Gastrocnemius medialis (tissue), 4 donors: ENCODE measurements at regions of chr4 and their contacts with region 1.

Region 1: DNA sequence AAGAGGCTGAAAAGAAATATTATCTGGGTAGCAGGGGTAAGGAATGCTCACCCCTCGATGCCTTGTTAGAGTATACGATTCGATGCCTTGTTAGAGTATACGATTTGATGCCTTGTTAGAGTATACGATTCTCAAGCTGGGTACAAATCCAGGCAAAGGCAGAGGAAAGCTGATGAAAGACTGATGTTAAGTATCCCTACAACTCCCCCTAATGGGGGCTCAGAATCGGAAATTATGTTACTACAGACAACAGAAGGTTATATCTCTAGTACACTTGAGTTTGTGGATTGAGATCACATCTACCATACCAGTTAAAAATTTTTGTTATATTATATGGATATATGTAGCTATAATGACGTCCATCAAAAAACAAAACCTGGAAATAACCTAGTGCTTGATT is 4.8 kb downstream of the LRRC66 start:
- DNase-seq: no peak
- ATAC-seq: no peak
- H3K4me3 ChIP-seq: no peak overlapping the region
- H3K27ac ChIP-seq: no peak overlapping the region
- H3K4me1 ChIP-seq: no peaks in the 10 kb centered on the region
- H3K27me3 ChIP-seq: no peaks in the 10 kb centered on the region
- CTCF ChIP-seq: no peak
- POLR2A ChIP-seq: no peak

Region 2: DNA sequence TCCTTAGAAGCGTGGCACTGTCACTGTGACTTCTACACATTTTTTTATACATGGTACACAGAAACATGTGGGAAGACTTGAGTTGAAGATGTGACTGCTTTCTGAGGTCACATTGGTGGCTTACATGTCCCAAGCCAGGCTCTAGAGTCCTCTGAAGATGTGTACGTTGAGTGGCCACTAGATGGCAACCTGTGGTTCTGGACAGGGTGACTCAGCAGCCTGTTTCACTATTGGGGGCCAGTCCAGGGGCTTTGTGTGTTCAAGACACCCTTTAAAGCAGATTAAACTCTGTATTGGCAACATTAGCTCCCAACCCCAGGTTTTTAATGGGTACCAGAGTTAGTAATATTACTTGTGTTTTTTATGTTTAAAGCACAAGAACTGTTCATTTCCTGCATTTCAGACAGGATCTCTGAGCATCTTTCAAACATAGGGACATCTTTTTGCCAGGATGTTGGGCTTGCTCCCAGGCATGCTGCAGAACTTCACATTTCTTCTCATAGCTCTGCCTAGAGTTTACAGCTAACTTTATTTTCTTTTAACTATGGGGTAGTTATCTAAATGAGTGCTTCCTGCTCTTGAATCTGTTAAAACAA is 119.5 kb before region 1 on chr4:
- in situ Hi-C with region 1: loop called in 2 of 4 experiments (anchors 10 to 25 kb)
- intact Hi-C with region 1: no loop called
- DNase-seq: peak; percentile 41 to 76
- ATAC-seq: peak; percentile 86 to 99
- H3K4me3 ChIP-seq: no peak overlapping the region
- H3K27ac ChIP-seq: peak overlapping the region; percentile 49 to 70 (median 62)
- H3K4me1 ChIP-seq: peaks cover 12 to 20% of the 10 kb centered on the region in 2 donors
- H3K27me3 ChIP-seq: no peaks in the 10 kb centered on the region
- CTCF ChIP-seq: peak; percentile 54 to 78 (median 72)
- POLR2A ChIP-seq: no peak

Region 3: DNA sequence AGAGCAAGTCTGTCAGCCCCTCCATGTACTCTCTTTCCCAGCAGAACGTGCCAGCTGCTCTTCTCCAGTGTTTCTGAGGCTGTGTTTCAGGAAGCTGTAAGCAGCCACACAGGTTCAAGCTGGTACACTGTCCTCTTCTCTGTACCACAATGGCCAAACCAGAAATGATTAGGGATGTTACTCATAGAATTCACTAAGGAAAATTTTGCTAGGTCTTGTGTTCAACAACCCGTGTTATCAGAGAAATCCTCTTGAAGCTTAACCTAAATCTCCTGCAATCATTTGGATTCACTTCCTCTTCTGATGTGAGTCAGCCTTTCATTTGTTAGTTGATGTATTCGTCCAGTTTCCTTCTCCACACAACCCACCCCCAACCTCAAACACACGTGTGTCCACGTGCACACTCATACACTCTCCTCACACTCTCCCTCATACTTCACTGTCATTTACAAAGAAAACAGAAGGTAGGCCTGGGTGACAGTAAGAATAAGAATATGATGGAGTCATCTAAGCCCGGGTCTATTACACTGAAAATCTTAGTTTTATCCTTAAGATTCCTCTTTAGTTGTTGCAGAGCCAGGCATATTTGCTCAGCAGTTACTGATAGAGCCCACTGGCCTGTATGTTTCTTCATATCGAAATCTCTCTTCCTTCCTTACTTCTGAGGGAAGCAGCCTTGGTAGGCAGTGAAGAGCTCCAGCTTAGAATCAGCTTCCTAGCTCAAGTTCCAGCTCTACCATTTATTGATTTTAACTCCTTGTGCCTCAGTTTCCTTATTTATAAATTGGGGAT is 109.0 kb before region 1 on chr4:
- in situ Hi-C with region 1: loop called in 1 of 4 experiments (anchors 25 kb)
- intact Hi-C with region 1: no loop called
- DNase-seq: no peak
- ATAC-seq: no peak
- H3K4me3 ChIP-seq: no peak overlapping the region
- H3K27ac ChIP-seq: no peak overlapping the region
- H3K4me1 ChIP-seq: no peaks in the 10 kb centered on the region
- H3K27me3 ChIP-seq: no peaks in the 10 kb centered on the region
- CTCF ChIP-seq: no peak
- POLR2A ChIP-seq: no peak